ENCODE measurements at regions of chr10 and their contacts with region 1.

Region 1: DNA sequence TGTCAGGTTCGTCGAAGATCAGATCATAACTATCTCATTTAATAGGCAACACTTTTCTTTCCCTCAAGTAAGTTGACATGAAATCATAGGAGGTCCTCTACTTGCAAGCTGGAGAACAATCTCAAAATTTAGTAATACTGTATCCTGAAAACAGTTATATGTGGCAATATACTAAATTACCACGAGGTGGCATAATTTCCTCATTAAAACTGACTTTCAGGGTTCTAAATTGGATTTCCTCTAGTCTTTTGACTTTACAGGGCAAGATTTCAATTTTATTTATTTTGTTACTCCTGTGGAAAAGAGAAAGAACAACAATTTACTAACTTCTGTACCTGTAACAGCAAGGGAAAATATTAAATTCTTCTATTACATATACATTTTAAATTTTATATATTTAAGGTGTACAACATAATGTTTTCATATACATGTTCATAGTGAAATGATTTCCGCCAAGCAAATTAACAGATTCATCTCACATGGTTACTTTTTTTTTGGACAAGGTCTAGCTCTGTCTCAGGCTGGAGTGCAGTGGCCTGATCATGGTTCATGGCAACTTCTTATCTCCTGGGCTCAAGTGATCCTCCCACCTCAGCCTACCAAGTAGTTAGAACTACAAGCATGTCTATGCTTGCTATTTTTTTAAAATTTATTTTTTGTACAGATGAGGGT is 53.4 kb upstream of the CYP2C18 start:
- DNase-seq: peak in 1 of 2 experiments; percentile 29
- H3K4me3 ChIP-seq: no peak overlapping the region
- H3K4me3 Mint-ChIP-seq: no peak overlapping the region
- H3K27ac Mint-ChIP-seq: peak overlapping the region; percentile 42
- H3K4me1 ChIP-seq: peaks cover 43% of the 10 kb centered on the region
- H3K4me1 Mint-ChIP-seq: peaks cover 20% of the 10 kb centered on the region
- H3K27me3 ChIP-seq: no peaks in the 10 kb centered on the region
- H3K27me3 Mint-ChIP-seq: no peaks in the 10 kb centered on the region
- CTCF ChIP-seq: peak; percentile 55 to 59

Region 2: DNA sequence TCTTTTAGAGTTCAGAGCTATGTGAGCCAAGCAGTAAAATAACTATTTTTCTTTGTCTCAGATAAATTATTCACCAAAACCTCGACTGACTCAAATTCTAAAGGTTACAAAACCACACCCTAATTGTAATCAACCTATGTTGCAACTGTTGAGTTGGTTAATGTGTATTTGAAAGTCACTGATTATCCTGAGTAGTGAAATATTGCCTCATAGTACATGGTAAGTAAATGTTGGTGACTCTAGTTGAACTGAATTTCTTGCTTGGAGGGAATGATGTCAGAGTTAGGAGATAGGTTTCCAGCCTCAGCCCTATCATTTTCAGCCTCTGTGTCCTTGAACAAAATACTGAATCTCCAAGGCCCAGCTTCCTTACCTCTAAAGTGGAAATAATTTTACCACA is 50.4 kb after region 1 on chr10:
- CTCF ChIA-PET with region 1: no interaction called
- POLR2A ChIA-PET with region 1: no interaction called
- intact Hi-C with region 1: loop called (anchors 5 kb)
- DNase-seq: peak in 1 of 2 experiments; percentile 64
- H3K4me3 ChIP-seq: no peak overlapping the region
- H3K4me3 Mint-ChIP-seq: peak overlapping the region; percentile 31
- H3K27ac Mint-ChIP-seq: peak overlapping the region; percentile 48
- H3K4me1 ChIP-seq: peaks cover 48% of the 10 kb centered on the region
- H3K4me1 Mint-ChIP-seq: peaks cover 29% of the 10 kb centered on the region
- H3K27me3 ChIP-seq: no peaks in the 10 kb centered on the region
- H3K27me3 Mint-ChIP-seq: no peaks in the 10 kb centered on the region
- CTCF ChIP-seq: no peak